Heart right ventricle (tissue), 16 donors: ENCODE measurements at regions of chr9 and their contacts with region 1.

Region 1: DNA sequence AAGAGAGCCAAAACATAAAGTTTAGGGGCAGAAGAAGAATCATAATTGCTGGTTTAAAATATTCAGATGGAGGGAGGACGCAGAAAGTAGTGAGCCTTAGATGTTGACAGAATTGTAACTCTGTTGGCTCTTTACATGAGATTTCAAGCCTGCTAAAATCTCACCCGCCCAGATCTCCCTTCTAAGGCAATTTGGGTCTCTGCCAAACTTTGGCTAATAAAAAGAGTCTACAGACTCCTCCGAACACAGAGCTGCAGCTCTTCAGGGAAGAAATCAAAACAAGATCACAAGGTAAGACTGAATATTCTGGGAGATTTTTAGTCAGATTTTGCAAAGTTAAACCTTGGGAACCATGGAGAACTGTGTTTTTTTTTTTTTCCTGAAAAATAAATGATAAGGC is at the start of gene IL33:
- DNase-seq: peak in 1 of 2 donors; percentile 70
- ATAC-seq: peak; percentile 57 to 89 (median 80)
- H3K4me3 ChIP-seq: peak within 1 kb of the TSS in 9 of 10 donors; percentile 16 to 56 (median 47)
- H3K27ac ChIP-seq: peak within 1 kb of the TSS in 9 of 10 donors; percentile 28 to 80 (median 69)
- H3K4me1 ChIP-seq: peaks cover 0 to 51% (median 6%) of the 10 kb centered on the region in 9 donors
- H3K27me3 ChIP-seq: no peaks in the 10 kb centered on the region
- CTCF ChIP-seq: no peak
- total RNA-seq, gene IL33: 11.8 to 41.8 (median 18.7) TPM

Region 2: DNA sequence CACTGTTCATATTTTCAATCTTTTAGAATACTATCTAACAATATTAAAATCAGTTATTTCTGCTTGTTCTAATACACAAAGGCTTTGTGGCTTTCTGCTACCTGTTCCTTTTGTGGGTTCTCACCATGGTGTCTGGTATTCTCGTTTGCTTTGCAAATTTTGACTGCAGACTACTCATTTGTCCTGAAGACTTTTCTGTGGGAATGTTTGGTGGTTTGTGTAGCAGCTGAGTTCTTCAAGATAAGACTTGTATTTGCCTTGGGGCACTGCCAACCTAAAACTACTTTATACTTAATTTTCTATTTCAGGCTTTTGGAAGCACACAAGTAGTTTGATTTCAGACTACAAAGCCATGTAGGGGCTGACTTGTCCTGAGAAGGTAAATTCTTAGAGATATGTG is 11.1 kb after region 1 on chr9:
- intact Hi-C with region 1: loop called in 1 of 10 experiments (anchors 1 kb)
- DNase-seq: peak in 1 of 2 donors; percentile 39
- ATAC-seq: peak in 5 of 8 donors; percentile 18 to 62 (median 49)
- H3K4me3 ChIP-seq: no peak overlapping the region
- H3K27ac ChIP-seq: peak overlapping the region in 5 of 10 donors; percentile 25 to 59 (median 46)
- H3K4me1 ChIP-seq: peaks cover 2 to 95% (median 52%) of the 10 kb centered on the region in 9 donors
- H3K27me3 ChIP-seq: no peaks in the 10 kb centered on the region
- CTCF ChIP-seq: no peak

Region 3: GRCh38 chr9:7944572-7944971 is 1729.0 kb after region 1 on chr9:
- intact Hi-C with region 1: loop called in 1 of 10 experiments (anchors 5 kb)
- DNase-seq: no peak
- ATAC-seq: no peak
- H3K4me3 ChIP-seq: no peak overlapping the region
- H3K27ac ChIP-seq: peak overlapping the region in 1 of 10 donors; percentile 25
- H3K4me1 ChIP-seq: peaks cover 0 to 13% (median 3%) of the 10 kb centered on the region in 9 donors
- H3K27me3 ChIP-seq: no peaks in the 10 kb centered on the region
- CTCF ChIP-seq: no peak